ENCODE measurements at regions of chr15 and their contacts with region 1.

Region 1: GRCh38 chr15:91302588-91303439 is 202.8 kb downstream of the SV2B start:
- DNase-seq: peak; percentile 31 to 52
- H3K4me3 ChIP-seq: no peak overlapping the region
- H3K27ac ChIP-seq: no peak overlapping the region
- H3K4me1 ChIP-seq: no peaks in the 10 kb centered on the region
- H3K27me3 ChIP-seq: peaks cover 0 to 3% (median 2%) of the 10 kb centered on the region in 4 experiments; a peak in 3 of 7 replicates
- CTCF ChIP-seq: peak; percentile 18 to 82 (median 77)
- EP300 ChIP-seq: no peak
- POLR2A ChIP-seq: no peak
- RAD21 ChIP-seq: peak; percentile 98 to 99

Region 2: DNA sequence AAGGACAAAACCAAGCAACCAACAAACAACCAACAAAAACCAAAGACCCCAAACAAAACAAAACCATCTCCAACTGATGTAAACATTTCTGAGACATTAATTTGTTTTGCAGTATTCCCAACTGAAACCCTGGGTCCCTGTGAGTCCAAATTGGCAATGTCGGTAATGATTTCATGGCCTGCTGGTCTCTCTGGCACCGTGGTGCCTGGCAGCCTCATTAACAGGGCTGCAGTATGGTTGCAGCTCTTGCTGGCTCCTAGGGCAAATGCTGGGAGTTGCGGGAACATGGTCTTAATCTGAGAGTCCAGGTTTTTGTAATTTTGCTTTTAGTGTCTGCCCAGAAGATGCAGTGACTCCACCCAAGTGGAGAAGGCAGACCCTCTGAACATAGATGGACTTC is 74.4 kb before region 1 on chr15:
- CTCF ChIA-PET with region 1: no interaction called
- POLR2A ChIA-PET with region 1: no interaction called
- DNase-seq: no peak
- H3K4me3 ChIP-seq: no peak overlapping the region
- H3K27ac ChIP-seq: no peak overlapping the region
- H3K4me1 ChIP-seq: 0 out of 7 replicates have a peak, but pooled peaks cover 0 to 3% (median 0%) of the 10 kb centered on the region in 4 experiments
- H3K27me3 ChIP-seq: no peaks in the 10 kb centered on the region
- CTCF ChIP-seq: no peak
- EP300 ChIP-seq: no peak
- POLR2A ChIP-seq: no peak
- RAD21 ChIP-seq: no peak

Region 3: DNA sequence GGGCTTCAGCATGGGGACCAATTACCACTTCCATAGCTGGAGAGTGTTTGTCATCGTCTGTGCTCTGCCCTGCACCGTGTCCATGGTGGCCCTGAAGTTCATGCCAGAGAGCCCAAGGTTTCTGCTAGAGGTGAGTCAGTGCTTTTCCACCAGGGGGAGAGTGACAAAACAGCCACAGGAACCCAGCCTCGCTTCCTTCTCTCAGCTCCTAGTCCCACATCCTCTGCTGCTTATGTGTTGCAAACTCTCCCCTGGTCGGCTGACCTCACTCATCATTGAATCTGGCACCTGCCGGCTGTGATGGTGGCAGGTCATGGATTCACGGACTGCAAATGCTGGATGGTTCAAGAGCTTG is 44.4 kb before region 1 on chr15:
- CTCF ChIA-PET with region 1: no interaction called
- POLR2A ChIA-PET with region 1: no interaction called
- DNase-seq: no peak
- H3K4me3 ChIP-seq: no peak overlapping the region
- H3K27ac ChIP-seq: no peak overlapping the region
- H3K4me1 ChIP-seq: no peaks in the 10 kb centered on the region
- H3K27me3 ChIP-seq: peaks cover 0 to 3% (median 0%) of the 10 kb centered on the region in 4 experiments; a peak in 1 of 7 replicates
- CTCF ChIP-seq: peak; percentile 33 to 49 (median 33)
- EP300 ChIP-seq: no peak
- POLR2A ChIP-seq: no peak
- RAD21 ChIP-seq: peak in 1 of 2 experiments; percentile 36; a peak in 1 of 4 replicates

Region 4: GRCh38 chr15:91426412-91426811 is 123.6 kb after region 1 on chr15:
- CTCF ChIA-PET with region 1: interaction called, 11 read pairs
- POLR2A ChIA-PET with region 1: no interaction called
- DNase-seq: no peak
- H3K4me3 ChIP-seq: no peak overlapping the region
- H3K27ac ChIP-seq: no peak overlapping the region
- H3K4me1 ChIP-seq: peaks cover 0 to 10% (median 5%) of the 10 kb centered on the region in 4 experiments; a peak in 5 of 7 replicates
- H3K27me3 ChIP-seq: no peaks in the 10 kb centered on the region
- CTCF ChIP-seq: no peak
- EP300 ChIP-seq: no peak
- POLR2A ChIP-seq: no peak
- RAD21 ChIP-seq: no peak

Region 5: DNA sequence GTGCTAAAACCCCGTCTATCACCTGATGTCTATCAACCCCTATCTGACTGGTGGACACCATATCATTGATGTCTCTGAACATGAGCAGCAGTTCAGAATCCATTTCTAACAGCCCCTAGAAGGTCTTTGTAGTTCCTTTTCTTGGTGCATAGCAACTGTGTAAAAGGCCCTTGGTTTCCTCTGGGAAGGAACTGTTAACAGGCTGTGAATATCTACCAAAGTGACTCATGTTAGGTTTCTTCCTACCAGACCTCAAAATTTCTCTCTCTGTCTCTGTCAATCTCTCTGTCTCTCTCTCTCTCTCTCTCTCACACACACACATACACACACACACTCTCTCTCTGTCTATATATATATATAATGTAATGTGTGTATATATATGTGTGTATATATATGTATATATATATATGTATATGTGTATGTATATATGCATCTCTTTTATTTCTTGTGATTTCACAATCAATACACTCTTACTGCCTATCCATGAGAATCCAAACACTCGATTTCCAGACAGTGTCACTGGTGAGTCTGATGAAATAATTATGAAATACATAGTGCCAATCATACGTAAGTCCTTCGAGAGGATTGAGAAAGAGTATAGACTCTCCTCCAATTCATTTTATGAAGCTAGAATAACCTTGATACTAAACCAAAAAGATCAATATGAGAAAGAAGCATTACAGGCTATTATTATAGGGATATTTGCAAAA is 214.8 kb after region 1 on chr15:
- CTCF ChIA-PET with region 1: interaction called, 10 read pairs
- POLR2A ChIA-PET with region 1: no interaction called
- DNase-seq: no peak
- H3K4me3 ChIP-seq: no peak overlapping the region
- H3K27ac ChIP-seq: no peak overlapping the region
- H3K4me1 ChIP-seq: peaks cover 0 to 6% (median 0%) of the 10 kb centered on the region in 4 experiments; a peak in 1 of 7 replicates
- H3K27me3 ChIP-seq: no peaks in the 10 kb centered on the region
- CTCF ChIP-seq: no peak
- EP300 ChIP-seq: no peak
- POLR2A ChIP-seq: no peak
- RAD21 ChIP-seq: no peak

Measured in H1 (cell line).